K562 (cell line): ENCODE measurements at regions of chr10 and their contacts with region 1.

Region 1: DNA sequence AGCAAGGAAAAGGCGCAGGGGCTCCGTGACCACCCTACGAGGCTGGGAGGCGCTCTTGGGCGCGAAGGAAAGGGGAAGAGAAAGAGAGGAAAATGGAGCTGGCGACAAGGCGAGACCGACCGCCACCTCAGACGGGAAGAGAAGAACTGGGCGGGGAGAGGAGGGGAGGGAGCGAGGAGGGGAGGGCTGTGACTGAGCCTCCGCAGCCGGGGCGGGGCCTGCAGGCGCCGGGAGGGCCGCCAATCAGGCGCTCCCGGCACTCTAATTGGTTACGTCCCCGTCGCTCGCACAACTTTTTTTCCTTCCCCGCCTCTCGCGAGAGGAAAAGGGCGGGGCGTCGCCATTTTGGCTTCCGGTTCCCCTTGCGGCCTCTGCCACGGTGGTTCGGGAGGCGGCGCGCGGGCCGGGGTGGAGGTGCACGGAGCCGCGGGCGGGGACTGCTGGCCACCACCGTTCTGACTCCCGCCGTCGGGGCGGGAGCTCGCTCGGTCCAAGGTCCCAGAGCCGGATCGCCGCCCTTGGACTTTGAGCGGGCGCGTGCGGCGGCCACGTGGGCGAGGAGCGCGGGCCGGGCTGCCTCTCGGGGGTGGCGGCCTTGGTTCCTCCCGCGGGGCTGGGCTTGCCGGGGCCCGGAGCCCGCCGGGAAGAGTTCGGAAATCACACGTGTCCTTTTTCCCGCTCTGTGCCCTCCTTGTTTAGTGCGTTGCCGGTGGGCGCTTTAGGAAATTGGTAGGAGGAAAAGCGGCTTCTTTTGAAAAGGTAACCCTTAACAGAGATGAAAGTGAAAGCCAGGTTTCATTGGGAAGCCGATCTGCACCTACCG is at the start of gene GDI2:
- DNase-seq: peak; percentile 96 to 99 (median 96)
- ATAC-seq: peak; percentile 92
- H3K4me3 ChIP-seq: peak within 1 kb of the TSS; percentile 98
- H3K27ac ChIP-seq: peak within 1 kb of the TSS; percentile 98
- H3K4me1 ChIP-seq: peaks cover 12 to 27% of the 10 kb centered on the region in 2 experiments
- H3K27me3 ChIP-seq: no peaks in the 10 kb centered on the region
- CTCF ChIP-seq: peak in 2 of 3 experiments; percentile 10 to 17; a peak in 2 of 6 replicates
- EP300 ChIP-seq: no peak
- POLR2A ChIP-seq: peak; percentile 98
- RAD21 ChIP-seq: no peak
- polyA plus RNA-seq, gene GDI2: 262 to 424 TPM

Region 2: DNA sequence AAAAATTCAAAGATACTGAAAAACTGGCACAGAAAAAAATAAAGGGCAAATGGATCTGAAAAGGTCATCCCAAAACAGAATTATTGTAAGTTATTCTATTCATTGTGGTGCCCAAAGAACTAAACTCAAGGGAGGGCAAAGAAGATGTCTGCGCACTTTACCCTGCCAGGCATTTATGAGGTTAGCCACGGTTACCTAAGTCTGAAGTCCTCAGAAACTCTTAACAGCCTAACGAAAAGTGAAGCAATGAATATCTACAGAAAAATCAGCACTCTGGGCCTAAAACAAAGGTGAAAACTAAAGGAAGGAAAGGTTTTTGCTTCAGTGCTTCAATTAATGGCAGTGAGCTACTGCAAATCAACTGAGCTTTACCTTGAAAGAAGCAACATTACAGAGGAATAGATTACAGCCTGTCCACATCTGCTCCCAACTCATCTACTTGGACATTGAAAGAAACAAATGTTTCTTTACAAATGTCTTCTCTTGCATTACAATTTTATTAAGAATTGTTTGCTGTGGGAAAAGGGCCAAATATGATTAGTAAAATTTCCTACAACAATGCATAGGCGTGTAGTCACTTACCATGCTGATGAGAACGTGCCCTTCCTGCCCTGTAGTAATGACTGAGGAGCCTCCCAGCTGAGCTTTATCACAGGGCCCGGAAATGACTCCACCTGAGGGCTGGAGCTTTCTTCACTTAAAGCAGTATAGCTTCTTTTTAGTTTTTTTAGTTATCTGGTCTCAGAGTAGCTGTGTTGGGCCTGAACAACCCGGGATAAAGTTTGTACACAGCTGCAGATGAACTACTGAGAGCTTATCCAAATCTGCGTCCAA is 409.1 kb before region 1 on chr10 and contains the start of gene TUBAL3:
- CTCF ChIA-PET with region 1: no interaction called
- POLR2A ChIA-PET with region 1: no interaction called
- in situ Hi-C with region 1: no loop called
- intact Hi-C with region 1: no loop called
- DNase-seq: peak; percentile 21 to 82 (median 52)
- ATAC-seq: peak; percentile 99
- H3K4me3 ChIP-seq: peak within 1 kb of the TSS; percentile 20; the same call in 1 of the 2 replicates
- H3K27ac ChIP-seq: peak within 1 kb of the TSS; percentile 51
- H3K4me1 ChIP-seq: peaks cover 2 to 21% of the 10 kb centered on the region in 2 experiments; a peak in 3 of 5 replicates
- H3K27me3 ChIP-seq: no peaks in the 10 kb centered on the region
- CTCF ChIP-seq: no peak
- EP300 ChIP-seq: peak; percentile 37
- POLR2A ChIP-seq: peak; percentile 66
- RAD21 ChIP-seq: no peak
- polyA plus RNA-seq, gene TUBAL3: 8.3 to 10.1 TPM

Region 3: DNA sequence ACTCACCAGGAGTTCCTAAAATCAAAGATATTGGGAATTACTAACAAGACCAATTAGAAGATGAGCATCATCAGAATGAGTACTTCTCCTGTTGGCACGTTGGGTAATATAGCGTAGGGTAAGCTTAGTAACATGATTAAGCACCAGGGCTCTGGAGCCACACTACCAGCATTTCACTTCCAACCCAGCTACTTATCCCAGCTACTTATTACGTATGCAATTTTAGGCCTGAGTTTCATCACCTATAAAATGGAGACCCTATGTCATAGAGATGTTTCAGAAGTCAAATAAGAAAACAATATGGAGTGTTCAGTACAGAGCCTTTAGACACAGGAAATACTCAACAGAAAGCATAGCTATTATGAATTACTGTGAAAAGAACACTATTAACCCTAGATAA is 19.3 kb before region 1 on chr10:
- CTCF ChIA-PET with region 1: no interaction called
- POLR2A ChIA-PET with region 1: interaction called, 14 read pairs
- in situ Hi-C with region 1: no loop called
- intact Hi-C with region 1: no loop called
- DNase-seq: no peak
- ATAC-seq: no peak
- H3K4me3 ChIP-seq: no peak overlapping the region
- H3K27ac ChIP-seq: no peak overlapping the region
- H3K4me1 ChIP-seq: no peaks in the 10 kb centered on the region
- H3K27me3 ChIP-seq: no peaks in the 10 kb centered on the region
- CTCF ChIP-seq: no peak
- EP300 ChIP-seq: no peak
- POLR2A ChIP-seq: no peak
- RAD21 ChIP-seq: no peak

Region 4: DNA sequence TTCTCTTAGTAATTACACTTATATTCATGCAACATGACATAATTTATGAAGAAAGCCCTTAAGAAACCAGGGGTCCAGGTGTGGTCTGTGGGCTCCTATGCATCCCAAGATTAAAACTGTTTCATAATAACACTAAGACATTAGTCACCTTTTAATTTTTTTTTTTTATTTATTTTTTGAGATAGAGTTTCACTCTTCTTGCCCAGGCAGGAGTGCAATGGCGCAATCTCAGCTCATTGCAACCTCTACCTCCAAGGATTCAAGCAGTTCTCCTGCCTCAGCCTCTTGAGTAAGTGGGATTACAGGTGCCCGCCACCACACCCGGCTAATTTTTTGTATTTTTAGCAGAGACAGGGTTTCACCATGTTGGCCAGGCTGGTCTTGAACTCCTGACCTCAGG is 12.7 kb before region 1 on chr10:
- CTCF ChIA-PET with region 1: no interaction called
- POLR2A ChIA-PET with region 1: interaction called, 14 read pairs
- in situ Hi-C with region 1: no loop called
- intact Hi-C with region 1: no loop called
- DNase-seq: no peak
- ATAC-seq: no peak
- H3K4me3 ChIP-seq: no peak overlapping the region
- H3K27ac ChIP-seq: no peak overlapping the region
- H3K4me1 ChIP-seq: no peaks in the 10 kb centered on the region
- H3K27me3 ChIP-seq: no peaks in the 10 kb centered on the region
- CTCF ChIP-seq: no peak
- EP300 ChIP-seq: no peak
- POLR2A ChIP-seq: no peak
- RAD21 ChIP-seq: no peak

Region 5: DNA sequence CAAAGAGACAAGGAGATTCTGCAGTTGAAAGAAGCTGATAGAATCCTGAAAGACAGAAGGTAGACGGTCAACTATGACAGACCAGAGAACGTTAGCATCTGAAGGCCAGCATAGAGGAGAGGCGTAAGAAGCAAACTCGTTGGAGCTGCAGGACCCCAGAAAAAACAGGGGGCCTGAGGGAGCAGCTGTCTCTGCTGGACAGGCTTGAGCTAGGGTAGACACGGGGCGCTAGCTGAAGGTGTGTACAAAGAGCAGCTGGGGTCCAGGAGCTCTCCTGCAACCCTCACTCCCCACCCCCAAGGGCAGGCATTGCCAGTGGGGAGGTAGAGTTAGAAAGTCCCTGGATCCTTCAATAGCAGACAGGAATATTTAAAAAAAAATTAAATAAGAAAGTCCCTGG is 14.3 kb after region 1 on chr10:
- CTCF ChIA-PET with region 1: no interaction called
- POLR2A ChIA-PET with region 1: interaction called, 19 read pairs
- in situ Hi-C with region 1: no loop called
- intact Hi-C with region 1: no loop called
- DNase-seq: no peak
- ATAC-seq: no peak
- H3K4me3 ChIP-seq: no peak overlapping the region
- H3K27ac ChIP-seq: no peak overlapping the region
- H3K4me1 ChIP-seq: peaks cover 12 to 18% of the 10 kb centered on the region in 2 experiments; a peak in 4 of 5 replicates
- H3K27me3 ChIP-seq: no peaks in the 10 kb centered on the region
- CTCF ChIP-seq: no peak
- EP300 ChIP-seq: no peak
- POLR2A ChIP-seq: no peak
- RAD21 ChIP-seq: no peak

Region 6: DNA sequence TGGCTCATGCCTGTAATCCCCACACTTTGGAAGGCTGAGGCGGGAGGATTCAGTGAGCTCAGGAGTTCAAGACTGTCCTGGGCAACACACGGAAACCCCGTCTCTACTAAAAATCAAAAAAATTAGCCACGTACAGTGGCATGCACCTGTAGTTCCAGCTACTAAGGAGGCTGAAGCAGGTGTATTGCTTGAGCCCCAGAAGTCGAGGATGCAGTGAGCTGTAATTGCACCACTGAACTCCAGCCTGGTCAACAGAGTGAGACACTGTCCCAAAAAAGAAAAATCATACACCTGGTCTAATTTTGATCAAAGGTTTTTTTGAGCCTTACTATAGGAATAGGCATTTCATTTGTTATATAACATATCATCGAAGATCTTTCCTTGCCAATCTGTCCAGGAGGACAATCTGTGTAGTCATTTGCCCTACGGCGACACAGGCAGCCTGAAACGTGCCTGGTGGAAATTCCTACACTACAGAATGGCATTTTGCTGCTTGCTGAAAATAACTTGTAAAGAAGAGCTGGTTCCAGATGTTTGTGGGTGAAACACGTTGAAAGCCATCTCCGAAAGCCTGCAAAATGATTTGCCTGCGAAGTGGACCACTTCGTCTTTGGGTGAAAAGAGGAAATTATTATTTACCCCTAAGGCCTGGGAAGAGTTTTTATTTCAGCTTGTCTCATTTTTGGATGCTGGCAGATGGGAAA is 31.0 kb after region 1 on chr10:
- CTCF ChIA-PET with region 1: no interaction called
- POLR2A ChIA-PET with region 1: interaction called, 19 read pairs
- in situ Hi-C with region 1: no loop called
- intact Hi-C with region 1: loop called (anchors 5 kb)
- DNase-seq: no peak
- ATAC-seq: no peak; the same call in 2 of the 3 replicates
- H3K4me3 ChIP-seq: no peak overlapping the region
- H3K27ac ChIP-seq: 0 out of 3 replicates have a peak overlapping the region, but pooled peaks have one; percentile 8
- H3K4me1 ChIP-seq: peaks cover 5 to 9% of the 10 kb centered on the region in 2 experiments
- H3K27me3 ChIP-seq: no peaks in the 10 kb centered on the region
- CTCF ChIP-seq: no peak
- EP300 ChIP-seq: no peak
- POLR2A ChIP-seq: no peak
- RAD21 ChIP-seq: no peak

Region 7: GRCh38 chr10:5858811-5859210 is 45.3 kb after region 1 on chr10:
- CTCF ChIA-PET with region 1: no interaction called
- POLR2A ChIA-PET with region 1: no interaction called
- in situ Hi-C with region 1: no loop called
- intact Hi-C with region 1: no loop called
- DNase-seq: no peak
- ATAC-seq: no peak
- H3K4me3 ChIP-seq: no peak overlapping the region
- H3K27ac ChIP-seq: no peak overlapping the region
- H3K4me1 ChIP-seq: no peaks in the 10 kb centered on the region; a peak in 1 of 5 replicates
- H3K27me3 ChIP-seq: no peaks in the 10 kb centered on the region
- CTCF ChIP-seq: no peak
- EP300 ChIP-seq: no peak
- POLR2A ChIP-seq: no peak
- RAD21 ChIP-seq: no peak

Region 8: DNA sequence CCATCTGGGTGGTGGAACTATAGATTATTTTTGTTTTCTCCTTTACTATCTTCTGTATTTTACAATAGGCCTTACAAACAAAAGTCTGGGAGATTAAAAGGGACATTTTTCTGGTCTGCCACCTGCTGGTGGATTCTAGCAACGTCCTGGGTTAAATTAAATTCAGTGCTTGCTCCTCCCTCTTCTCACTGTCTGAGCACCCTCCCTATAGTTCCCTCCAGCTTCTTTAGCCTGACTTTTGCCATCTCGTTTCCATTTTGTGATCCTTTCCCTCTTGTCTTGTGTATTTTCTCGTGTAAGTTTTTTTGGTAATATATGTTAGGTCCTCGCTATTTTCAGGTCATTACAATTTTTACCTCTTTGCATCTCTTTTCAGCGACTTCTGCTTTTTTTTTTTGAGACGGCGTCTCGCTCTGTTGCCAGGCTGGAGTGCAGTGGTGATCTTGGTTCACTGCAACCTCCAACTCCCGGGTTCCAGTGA is 60.1 kb after region 1 on chr10:
- CTCF ChIA-PET with region 1: interaction called, 3 read pairs
- POLR2A ChIA-PET with region 1: interaction called, 3 read pairs
- in situ Hi-C with region 1: no loop called
- intact Hi-C with region 1: loop called (anchors 5 kb)
- DNase-seq: peak; percentile 72 to 78 (median 76)
- ATAC-seq: peak; percentile 96
- H3K4me3 ChIP-seq: no peak overlapping the region
- H3K27ac ChIP-seq: no peak overlapping the region
- H3K4me1 ChIP-seq: no peaks in the 10 kb centered on the region; a peak in 1 of 5 replicates
- H3K27me3 ChIP-seq: no peaks in the 10 kb centered on the region
- CTCF ChIP-seq: peak; percentile 58 to 84 (median 73); a peak in 5 of 6 replicates
- EP300 ChIP-seq: no peak
- POLR2A ChIP-seq: no peak; the same call in 1 of the 2 replicates
- RAD21 ChIP-seq: peak; percentile 69 to 77

Region 9: DNA sequence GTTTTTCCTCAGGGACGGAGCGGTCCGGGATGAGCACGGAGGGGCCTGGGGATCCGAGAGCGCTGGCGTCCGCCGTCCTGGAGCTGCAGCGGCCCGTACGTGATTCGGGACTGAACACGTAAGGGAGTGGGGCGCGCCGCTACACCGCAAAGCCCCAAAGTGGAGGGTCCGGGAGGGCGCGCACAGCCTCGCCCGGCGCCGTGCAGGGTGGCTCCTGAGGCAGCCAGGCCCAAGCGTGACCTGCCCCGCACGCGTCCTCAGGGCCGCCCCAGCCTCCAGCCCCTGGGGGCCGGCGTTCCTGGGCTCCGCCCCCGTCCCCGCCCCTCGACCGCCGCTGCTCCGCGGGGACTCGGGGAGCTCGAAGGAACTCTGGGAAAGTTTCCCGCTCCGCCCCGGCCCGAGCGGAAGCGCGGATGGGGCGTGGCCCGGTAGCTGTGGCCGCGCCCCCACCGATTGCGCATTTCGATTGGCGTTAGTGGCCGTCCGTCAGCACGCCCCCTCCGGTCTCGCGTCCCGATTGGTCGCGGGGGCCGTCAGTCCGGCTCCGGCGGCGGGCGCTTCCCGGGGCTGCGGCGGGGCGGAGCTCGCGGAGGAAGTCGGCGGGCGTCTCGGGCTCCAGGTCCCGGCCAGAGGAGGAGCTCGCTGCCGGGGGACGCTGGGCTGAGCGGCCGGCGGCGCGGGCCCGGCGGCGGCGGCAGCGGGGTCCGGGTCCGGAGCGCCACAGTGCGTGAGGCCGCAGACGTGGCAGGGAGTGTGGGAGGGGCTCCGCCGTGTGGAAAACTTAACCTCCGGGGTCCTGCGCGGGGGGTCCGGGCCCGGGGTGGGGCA is 76.3 kb after region 1 on chr10 and contains the starts of genes ANKRD16 and FBH1:
- CTCF ChIA-PET with region 1: no interaction called
- POLR2A ChIA-PET with region 1: interaction called, 25 read pairs
- in situ Hi-C with region 1: no loop called
- intact Hi-C with region 1: loop called (anchors 5 kb)
- DNase-seq: peak; percentile 97 to 99 (median 98)
- ATAC-seq: peak; percentile 92
- H3K4me3 ChIP-seq: peak within 1 kb of the TSS; percentile 84
- H3K27ac ChIP-seq: peak within 1 kb of the TSS; percentile 87
- H3K4me1 ChIP-seq: peaks cover 42 to 45% of the 10 kb centered on the region in 2 experiments
- H3K27me3 ChIP-seq: no peaks in the 10 kb centered on the region
- CTCF ChIP-seq: peak in 1 of 3 experiments; percentile 22; a peak in 2 of 6 replicates
- EP300 ChIP-seq: no peak
- POLR2A ChIP-seq: peak; percentile 90
- RAD21 ChIP-seq: no peak
- polyA plus RNA-seq, gene ANKRD16: 1.5 to 2.2 TPM
- polyA plus RNA-seq, gene FBH1: 13.4 to 23.4 TPM

Region 10: DNA sequence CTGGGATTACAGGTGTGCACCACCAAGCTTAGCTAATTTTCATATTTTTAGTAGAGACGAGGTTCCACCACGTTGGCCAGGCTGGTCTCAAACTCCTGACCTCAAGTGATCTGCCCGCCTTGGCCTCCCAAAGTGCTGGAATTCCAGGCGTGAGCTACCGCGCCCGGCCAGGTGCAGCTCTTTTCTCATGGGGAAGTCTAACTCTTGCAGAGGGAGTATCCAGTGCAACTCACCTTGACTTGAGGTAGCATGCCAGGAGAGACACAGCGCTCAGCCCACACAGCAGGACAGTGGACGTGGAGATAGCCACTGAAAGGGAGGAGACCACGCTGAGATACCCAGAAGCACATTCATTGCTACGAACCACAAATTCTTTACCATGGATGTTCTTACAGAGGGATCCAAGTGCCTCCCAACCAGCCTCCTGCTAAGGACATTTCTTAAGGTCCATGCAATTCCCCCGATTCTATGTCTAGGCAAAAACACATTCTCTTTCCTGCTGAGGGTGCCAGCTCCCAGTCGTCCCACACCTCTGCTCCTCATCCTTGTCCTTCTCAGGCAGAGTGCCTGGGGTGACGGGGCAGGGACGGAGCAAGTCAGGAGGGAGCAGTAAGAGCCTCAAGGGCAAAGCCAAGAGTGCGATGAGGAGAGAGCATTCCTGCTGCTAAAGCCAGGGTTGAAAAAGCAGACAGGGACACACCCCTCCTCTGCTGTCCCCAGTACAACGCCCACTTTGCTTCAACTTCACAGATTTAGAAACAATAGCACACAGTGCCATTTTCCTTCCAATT is 142.8 kb after region 1 on chr10:
- CTCF ChIA-PET with region 1: no interaction called
- POLR2A ChIA-PET with region 1: no interaction called
- in situ Hi-C with region 1: no loop called
- intact Hi-C with region 1: no loop called
- DNase-seq: no peak
- ATAC-seq: no peak
- H3K4me3 ChIP-seq: no peak overlapping the region
- H3K27ac ChIP-seq: no peak overlapping the region
- H3K4me1 ChIP-seq: peaks cover 6 to 13% of the 10 kb centered on the region in 2 experiments; a peak in 4 of 5 replicates
- H3K27me3 ChIP-seq: no peaks in the 10 kb centered on the region
- CTCF ChIP-seq: no peak
- EP300 ChIP-seq: no peak
- POLR2A ChIP-seq: no peak
- RAD21 ChIP-seq: no peak